ENCODE measurements at regions of chr15 and their contacts with region 1.

Region 1: GRCh38 chr15:34587717-34588674 is 4.5 kb upstream of the GOLGA8B start:
- DNase-seq: peak; percentile 72 to 87 (median 78)
- ATAC-seq: peak; percentile 74
- H3K4me3 ChIP-seq: peak overlapping the region; percentile 30
- H3K27ac ChIP-seq: peak overlapping the region; percentile 63; the same call in 2 of the 3 replicates
- H3K4me1 ChIP-seq: peaks cover 0 to 15% of the 10 kb centered on the region in 2 experiments; a peak in 3 of 5 replicates
- H3K27me3 ChIP-seq: no peaks in the 10 kb centered on the region
- CTCF ChIP-seq: peak; percentile 80 to 93 (median 82)
- EP300 ChIP-seq: no peak
- POLR2A ChIP-seq: peak; percentile 84
- RAD21 ChIP-seq: peak; percentile 92 to 94

Region 2: GRCh38 chr15:34056936-34057335 is 531.1 kb before region 1 on chr15:
- CTCF ChIA-PET with region 1: interaction called, 4 read pairs
- POLR2A ChIA-PET with region 1: no interaction called
- in situ Hi-C with region 1: no loop called
- intact Hi-C with region 1: loop called (anchors 1 kb)
- DNase-seq: no peak
- ATAC-seq: no peak
- H3K4me3 ChIP-seq: no peak overlapping the region
- H3K27ac ChIP-seq: no peak overlapping the region
- H3K4me1 ChIP-seq: no peaks in the 10 kb centered on the region
- H3K27me3 ChIP-seq: peaks cover 2 to 4% of the 10 kb centered on the region in 2 experiments; a peak in 1 of 5 replicates
- CTCF ChIP-seq: no peak
- EP300 ChIP-seq: no peak
- POLR2A ChIP-seq: no peak
- RAD21 ChIP-seq: no peak

Region 3: DNA sequence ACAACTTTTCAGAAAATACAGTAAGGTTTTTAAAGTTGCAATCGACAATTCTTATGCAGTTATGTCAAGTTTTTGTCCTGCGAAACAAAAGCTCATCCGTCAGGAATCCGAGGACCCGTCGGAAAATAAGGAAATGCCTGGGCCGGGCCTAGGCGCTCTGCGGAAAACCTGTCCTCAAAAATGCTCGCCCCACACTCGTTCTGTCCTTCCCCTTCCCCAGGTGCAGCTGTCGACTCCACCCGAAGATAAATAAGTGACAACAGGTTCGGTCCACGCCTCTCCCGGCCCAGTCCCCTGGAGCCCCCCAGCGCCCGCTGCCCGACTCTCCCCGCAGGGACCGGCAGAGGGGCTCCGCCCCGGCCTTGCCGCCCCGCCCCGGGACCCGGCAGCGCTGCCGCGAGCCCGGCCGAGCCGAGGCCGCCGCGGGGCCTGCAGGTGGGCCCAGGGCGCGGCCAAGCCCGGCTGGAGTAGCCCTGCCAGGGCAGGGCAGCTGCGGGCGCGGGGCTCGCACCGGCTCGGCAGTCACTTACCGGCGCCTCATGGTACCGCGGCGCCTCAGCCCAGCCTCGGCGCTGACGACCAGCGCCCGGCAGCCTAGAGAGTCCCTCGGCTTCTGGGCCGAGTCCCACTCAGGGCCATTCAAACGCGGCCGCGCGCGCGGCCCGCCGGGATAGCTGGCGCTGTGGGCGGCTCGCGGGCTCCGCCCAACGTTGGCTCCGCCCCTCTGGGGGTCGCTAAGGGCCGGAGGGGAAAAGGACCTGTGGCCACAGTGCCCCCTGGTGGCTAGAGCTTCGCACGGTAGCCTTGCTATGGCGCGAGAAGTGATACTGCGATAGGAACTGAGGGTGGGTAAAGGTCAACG is 378.3 kb before region 1 on chr15 and contains the start of gene KATNBL1:
- CTCF ChIA-PET with region 1: no interaction called
- POLR2A ChIA-PET with region 1: interaction called, 7 read pairs
- in situ Hi-C with region 1: no loop called
- intact Hi-C with region 1: loop called (anchors 10 kb)
- DNase-seq: peak; percentile 95 to 97 (median 96)
- ATAC-seq: peak; percentile 98
- H3K4me3 ChIP-seq: peak within 1 kb of the TSS; percentile 81
- H3K27ac ChIP-seq: peak within 1 kb of the TSS; percentile 85
- H3K4me1 ChIP-seq: no peaks in the 10 kb centered on the region; a peak in 1 of 5 replicates
- H3K27me3 ChIP-seq: no peaks in the 10 kb centered on the region
- CTCF ChIP-seq: peak; percentile 90 to 97 (median 91)
- EP300 ChIP-seq: no peak
- POLR2A ChIP-seq: peak; percentile 92
- RAD21 ChIP-seq: peak; percentile 84 to 86
- polyA plus RNA-seq, gene KATNBL1: 6.6 to 10.6 TPM

Region 4: GRCh38 chr15:34367101-34368081 is 220.6 kb before region 1 on chr15 and contains the start of gene LPCAT4:
- CTCF ChIA-PET with region 1: no interaction called
- POLR2A ChIA-PET with region 1: interaction called, 5 read pairs
- in situ Hi-C with region 1: no loop called
- intact Hi-C with region 1: loop called (anchors 5 kb)
- DNase-seq: peak; percentile 94 to 95 (median 94)
- ATAC-seq: peak; percentile 95
- H3K4me3 ChIP-seq: peak within 1 kb of the TSS; percentile 99
- H3K27ac ChIP-seq: peak within 1 kb of the TSS; percentile 91
- H3K4me1 ChIP-seq: peaks cover 7 to 22% of the 10 kb centered on the region in 2 experiments; a peak in 4 of 5 replicates
- H3K27me3 ChIP-seq: no peaks in the 10 kb centered on the region
- CTCF ChIP-seq: peak; percentile 94 to 97 (median 94)
- EP300 ChIP-seq: no peak
- POLR2A ChIP-seq: peak; percentile 86
- RAD21 ChIP-seq: peak; percentile 85 to 89
- polyA plus RNA-seq, gene LPCAT4: 7.6 to 12.3 TPM

Region 5: DNA sequence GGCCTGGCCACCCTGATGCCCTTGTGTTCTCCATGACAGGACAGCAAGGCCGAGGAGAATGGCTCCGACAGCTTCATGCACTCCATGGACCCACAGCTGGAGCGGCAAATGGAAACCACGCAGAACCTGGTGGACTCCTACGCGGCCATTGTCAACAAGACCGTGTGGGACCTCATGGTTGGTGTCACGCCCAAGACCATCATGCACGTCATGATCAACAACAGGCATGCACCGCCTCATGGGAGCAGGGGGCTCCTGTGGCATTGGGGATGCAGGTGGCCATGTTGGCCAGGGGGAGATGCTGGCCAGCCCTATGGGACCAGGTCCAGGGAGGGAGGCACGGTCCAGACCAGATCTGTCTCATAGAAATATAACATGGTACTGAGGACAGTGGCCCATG is 67.4 kb before region 1 on chr15:
- CTCF ChIA-PET with region 1: no interaction called
- POLR2A ChIA-PET with region 1: no interaction called
- in situ Hi-C with region 1: loop called (anchors 10 kb)
- intact Hi-C with region 1: loop called (anchors 10 kb)
- DNase-seq: no peak
- ATAC-seq: no peak
- H3K4me3 ChIP-seq: no peak overlapping the region
- H3K27ac ChIP-seq: no peak overlapping the region
- H3K4me1 ChIP-seq: peaks cover 3 to 4% of the 10 kb centered on the region in 2 experiments; a peak in 3 of 5 replicates
- H3K27me3 ChIP-seq: peaks cover 3 to 15% of the 10 kb centered on the region in 2 experiments; a peak in 3 of 5 replicates
- CTCF ChIP-seq: no peak
- EP300 ChIP-seq: no peak
- POLR2A ChIP-seq: no peak
- RAD21 ChIP-seq: no peak

Region 6: GRCh38 chr15:34927726-34928125 is 339.7 kb after region 1 on chr15:
- CTCF ChIA-PET with region 1: no interaction called
- POLR2A ChIA-PET with region 1: no interaction called
- in situ Hi-C with region 1: no loop called
- intact Hi-C with region 1: no loop called
- DNase-seq: no peak
- ATAC-seq: no peak
- H3K4me3 ChIP-seq: no peak overlapping the region
- H3K27ac ChIP-seq: no peak overlapping the region
- H3K4me1 ChIP-seq: no peaks in the 10 kb centered on the region
- H3K27me3 ChIP-seq: no peaks in the 10 kb centered on the region
- CTCF ChIP-seq: no peak
- EP300 ChIP-seq: no peak
- POLR2A ChIP-seq: no peak
- RAD21 ChIP-seq: no peak